Natural killer cell (primary cell): ENCODE measurements at regions of chr3 and their contacts with region 1.

Region 1: DNA sequence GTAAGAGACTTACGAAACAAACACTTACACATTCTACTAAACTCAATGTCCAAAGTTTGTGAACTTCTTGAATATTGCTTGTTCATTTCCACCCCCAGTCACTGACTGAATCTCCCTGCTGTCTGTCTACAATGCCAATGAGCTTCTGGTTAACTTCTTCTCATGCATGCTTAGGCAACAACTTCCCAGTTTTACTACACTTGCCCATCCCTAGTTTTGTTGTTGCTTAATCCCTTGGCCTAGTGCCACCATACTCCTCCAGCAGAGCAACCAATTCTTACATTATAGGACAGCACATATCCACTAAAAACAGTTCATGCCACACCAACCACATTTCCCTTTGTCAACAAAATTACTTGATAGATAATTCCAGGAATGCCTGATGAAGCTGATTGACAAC is 40.9 kb upstream of the CCR2 start:
- DNase-seq: no peak
- ATAC-seq: no peak
- H3K4me3 ChIP-seq: no peak overlapping the region
- H3K4me3 Mint-ChIP-seq: no peak overlapping the region
- H3K27ac ChIP-seq: no peak overlapping the region
- H3K27ac Mint-ChIP-seq: no peak overlapping the region
- H3K4me1 ChIP-seq: peaks cover 4% of the 10 kb centered on the region
- H3K4me1 Mint-ChIP-seq: no peaks in the 10 kb centered on the region
- H3K27me3 ChIP-seq: no peaks in the 10 kb centered on the region
- H3K27me3 Mint-ChIP-seq: peaks cover 0 to 9% of the 10 kb centered on the region in 2 donors
- CTCF ChIP-seq: no peak

Region 2: DNA sequence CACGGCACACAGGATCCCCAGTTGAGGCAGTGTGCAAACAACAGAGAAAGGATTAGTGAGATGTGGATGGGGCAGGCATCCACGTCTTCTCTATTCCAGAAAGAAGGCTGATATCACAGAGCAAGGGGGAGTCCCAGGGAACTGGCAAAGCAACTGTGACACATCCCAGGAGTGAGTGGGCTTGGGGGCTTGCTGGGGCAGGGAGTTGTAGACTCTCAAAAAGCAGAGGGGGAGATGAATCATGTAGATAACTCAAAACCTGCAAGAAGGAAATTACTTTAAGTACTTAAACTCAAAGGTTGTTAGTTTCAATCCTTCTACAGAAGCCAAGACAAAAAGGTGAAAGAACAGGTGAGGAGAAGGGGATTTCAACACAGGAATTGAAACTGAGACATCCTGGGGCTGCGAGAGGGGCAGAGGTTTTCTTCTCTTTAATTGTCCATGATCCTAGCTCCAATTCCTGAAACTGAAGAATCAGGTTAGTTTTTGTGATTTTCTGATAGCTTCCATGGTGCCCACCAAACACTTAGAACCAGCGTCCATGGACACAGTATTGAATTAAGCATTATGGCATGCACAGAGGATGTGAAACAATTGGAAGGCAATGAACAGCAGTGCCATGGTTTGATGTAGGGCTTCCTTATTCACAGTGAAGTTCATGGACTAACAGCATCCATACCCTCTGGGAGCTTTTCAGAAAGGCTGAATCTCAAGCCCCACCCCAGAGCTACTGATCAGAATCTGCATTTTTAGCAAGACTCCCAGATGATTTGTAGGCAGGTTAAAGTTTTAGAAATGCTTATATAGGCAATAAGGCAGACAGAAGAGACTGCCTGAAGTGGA is 18.8 kb before region 1 on chr3:
- intact Hi-C with region 1: no loop called
- DNase-seq: no peak
- ATAC-seq: no peak
- H3K4me3 ChIP-seq: no peak overlapping the region
- H3K4me3 Mint-ChIP-seq: no peak overlapping the region
- H3K27ac ChIP-seq: peak overlapping the region; percentile 36
- H3K27ac Mint-ChIP-seq: peak overlapping the region in 1 of 2 donors; percentile 6
- H3K4me1 ChIP-seq: peaks cover 43% of the 10 kb centered on the region
- H3K4me1 Mint-ChIP-seq: peaks cover 35 to 50% of the 10 kb centered on the region in 2 donors
- H3K27me3 ChIP-seq: no peaks in the 10 kb centered on the region
- H3K27me3 Mint-ChIP-seq: no peaks in the 10 kb centered on the region
- CTCF ChIP-seq: no peak

Region 3: DNA sequence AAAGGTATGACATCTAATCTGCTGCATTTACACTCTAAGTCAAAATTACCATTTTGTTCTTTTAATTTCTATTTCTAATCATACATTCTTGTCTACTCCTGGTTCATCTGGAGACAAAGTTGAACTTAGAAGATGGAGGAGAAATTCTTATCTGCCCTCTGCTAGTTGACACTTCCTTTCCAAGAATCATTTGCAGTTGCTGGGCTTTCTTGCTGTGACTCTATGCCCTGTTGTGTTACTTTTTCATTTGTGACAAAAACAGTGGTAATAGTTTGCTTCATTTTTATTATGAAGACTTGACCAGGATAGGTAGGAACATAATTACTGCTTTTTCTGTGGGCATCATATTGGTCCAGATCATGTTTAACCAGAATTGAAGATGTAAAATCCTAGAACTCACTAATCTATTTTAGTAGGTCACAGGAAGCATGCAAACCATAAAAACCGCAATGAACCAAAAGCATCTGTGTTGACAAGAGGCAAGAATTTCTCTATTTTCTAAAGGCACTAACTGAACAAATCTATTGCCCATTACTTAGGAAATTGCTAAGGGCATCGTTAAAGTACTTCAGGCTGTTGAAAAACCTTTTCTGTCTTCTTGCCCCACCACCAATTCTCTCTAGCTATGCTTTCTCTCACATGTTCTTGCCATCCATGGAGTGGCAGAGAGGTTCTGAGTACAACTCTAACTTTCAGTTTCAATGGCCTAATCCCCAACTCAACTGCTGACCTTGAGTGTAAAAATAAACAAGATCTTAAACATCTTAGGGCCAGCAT is 36.7 kb after region 1 on chr3:
- intact Hi-C with region 1: loop called (anchors 5 kb)
- DNase-seq: peak in 1 of 2 donors; percentile 63
- ATAC-seq: peak; percentile 59 to 72 (median 64)
- H3K4me3 ChIP-seq: no peak overlapping the region
- H3K4me3 Mint-ChIP-seq: peak overlapping the region; percentile 73
- H3K27ac ChIP-seq: peak overlapping the region; percentile 79
- H3K27ac Mint-ChIP-seq: peak overlapping the region; percentile 85 to 86
- H3K4me1 ChIP-seq: peaks cover 45% of the 10 kb centered on the region
- H3K4me1 Mint-ChIP-seq: peaks cover 70 to 71% of the 10 kb centered on the region in 2 donors
- H3K27me3 ChIP-seq: no peaks in the 10 kb centered on the region
- H3K27me3 Mint-ChIP-seq: no peaks in the 10 kb centered on the region
- CTCF ChIP-seq: no peak

Region 4: GRCh38 chr3:46359733-46360493 is 46.9 kb after region 1 on chr3:
- intact Hi-C with region 1: no loop called
- DNase-seq: peak in 1 of 2 donors; percentile 38
- ATAC-seq: peak; percentile 62 to 69 (median 62)
- H3K4me3 ChIP-seq: no peak overlapping the region
- H3K4me3 Mint-ChIP-seq: peak overlapping the region; percentile 26
- H3K27ac ChIP-seq: peak overlapping the region; percentile 16
- H3K27ac Mint-ChIP-seq: peak overlapping the region in 1 of 2 donors; percentile 56
- H3K4me1 ChIP-seq: peaks cover 37% of the 10 kb centered on the region
- H3K4me1 Mint-ChIP-seq: peaks cover 36 to 43% of the 10 kb centered on the region in 2 donors
- H3K27me3 ChIP-seq: no peaks in the 10 kb centered on the region
- H3K27me3 Mint-ChIP-seq: no peaks in the 10 kb centered on the region
- CTCF ChIP-seq: no peak